Endothelial cell of umbilical vein (primary cell): ENCODE measurements at regions of chr19 and their contacts with region 1.

Region 1: DNA sequence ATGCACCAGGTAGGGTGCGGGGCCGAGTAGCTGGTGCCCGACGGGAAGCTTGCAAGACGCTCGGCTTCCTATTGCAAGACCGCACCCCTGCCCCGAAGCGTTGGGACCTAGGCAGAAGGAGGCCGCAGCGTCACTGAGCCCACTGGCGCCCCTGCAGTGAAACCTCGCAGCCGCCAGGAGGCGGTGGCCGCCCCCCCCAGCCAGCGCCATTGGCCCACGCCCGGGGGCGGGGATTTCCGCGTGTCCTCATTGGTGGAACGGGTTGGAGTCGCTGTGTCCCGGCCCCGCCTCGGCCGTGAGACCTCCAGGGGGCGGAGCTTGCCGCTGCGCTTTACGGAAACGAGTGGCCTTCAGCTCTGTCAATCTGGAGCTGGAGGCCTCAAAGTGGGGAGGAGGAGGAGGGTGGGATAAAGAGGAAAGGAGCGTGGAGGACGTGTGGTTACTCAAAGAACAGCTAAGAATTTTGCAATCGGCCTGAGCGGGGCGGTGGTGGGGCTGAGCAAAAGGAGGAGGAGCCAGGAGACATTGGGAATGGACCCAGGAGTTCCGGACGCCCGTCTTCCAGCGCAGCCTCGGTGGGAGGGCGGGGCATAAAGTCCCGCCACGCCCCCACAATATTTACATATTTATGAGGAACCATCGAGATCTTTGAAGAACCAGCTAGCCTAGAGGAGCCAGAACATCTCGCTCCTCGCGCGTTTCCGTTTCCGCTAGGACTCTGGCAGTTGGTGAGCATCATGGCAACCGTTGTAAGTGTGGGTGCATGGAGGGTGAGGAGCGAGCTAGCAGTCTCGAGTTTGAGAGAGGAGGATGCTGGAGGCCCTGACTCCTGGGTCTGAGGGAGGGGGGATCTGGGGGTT is at the starts of genes GYS1 and RUVBL2:
- DNase-seq: peak; percentile 100
- H3K4me3 ChIP-seq: peak within 1 kb of the TSS; percentile 83 to 92 (median 86)
- H3K27ac ChIP-seq: peak within 1 kb of the TSS; percentile 61
- H3K4me1 ChIP-seq: peaks cover 14% of the 10 kb centered on the region
- H3K27me3 ChIP-seq: no peaks in the 10 kb centered on the region
- CTCF ChIP-seq: peak; percentile 98 to 100
- POLR2A ChIP-seq: peak; percentile 88
- total RNA-seq, gene GYS1: 53.9 and 58.9 TPM in 2 replicates
- total RNA-seq, gene RUVBL2: 110 and 115 TPM in 2 replicates

Region 2: GRCh38 chr19:48795055-48795684 is 198.2 kb before region 1 on chr19:
- CTCF ChIA-PET with region 1: interaction called, 13 read pairs
- POLR2A ChIA-PET with region 1: no interaction called
- dilution Hi-C with region 1: no loop called
- intact Hi-C with region 1: no loop called
- DNase-seq: peak; percentile 95
- H3K4me3 ChIP-seq: peak overlapping the region in 2 of 3 experiments; percentile 18 to 37
- H3K27ac ChIP-seq: peak overlapping the region; percentile 2
- H3K4me1 ChIP-seq: peaks cover 3% of the 10 kb centered on the region
- H3K27me3 ChIP-seq: no peaks in the 10 kb centered on the region
- CTCF ChIP-seq: peak; percentile 94 to 96
- POLR2A ChIP-seq: peak; percentile 48

Region 3: GRCh38 chr19:48918801-48919247 is 74.6 kb before region 1 on chr19:
- CTCF ChIA-PET with region 1: no interaction called
- POLR2A ChIA-PET with region 1: no interaction called
- dilution Hi-C with region 1: no loop called
- intact Hi-C with region 1: no loop called
- DNase-seq: peak; percentile 21
- H3K4me3 ChIP-seq: no peak overlapping the region
- H3K27ac ChIP-seq: no peak overlapping the region
- H3K4me1 ChIP-seq: no peaks in the 10 kb centered on the region
- H3K27me3 ChIP-seq: no peaks in the 10 kb centered on the region
- CTCF ChIP-seq: no peak
- POLR2A ChIP-seq: no peak

Region 4: GRCh38 chr19:48975947-48976847 is 17.2 kb before region 1 on chr19:
- CTCF ChIA-PET with region 1: interaction called, 41 read pairs
- POLR2A ChIA-PET with region 1: interaction called, 3 read pairs
- dilution Hi-C with region 1: no loop called
- intact Hi-C with region 1: loop called (anchors 2 kb)
- DNase-seq: peak; percentile 49
- H3K4me3 ChIP-seq: no peak overlapping the region
- H3K27ac ChIP-seq: no peak overlapping the region
- H3K4me1 ChIP-seq: no peaks in the 10 kb centered on the region
- H3K27me3 ChIP-seq: no peaks in the 10 kb centered on the region
- CTCF ChIP-seq: peak in 1 of 2 donors; percentile 4
- POLR2A ChIP-seq: no peak

Region 5: DNA sequence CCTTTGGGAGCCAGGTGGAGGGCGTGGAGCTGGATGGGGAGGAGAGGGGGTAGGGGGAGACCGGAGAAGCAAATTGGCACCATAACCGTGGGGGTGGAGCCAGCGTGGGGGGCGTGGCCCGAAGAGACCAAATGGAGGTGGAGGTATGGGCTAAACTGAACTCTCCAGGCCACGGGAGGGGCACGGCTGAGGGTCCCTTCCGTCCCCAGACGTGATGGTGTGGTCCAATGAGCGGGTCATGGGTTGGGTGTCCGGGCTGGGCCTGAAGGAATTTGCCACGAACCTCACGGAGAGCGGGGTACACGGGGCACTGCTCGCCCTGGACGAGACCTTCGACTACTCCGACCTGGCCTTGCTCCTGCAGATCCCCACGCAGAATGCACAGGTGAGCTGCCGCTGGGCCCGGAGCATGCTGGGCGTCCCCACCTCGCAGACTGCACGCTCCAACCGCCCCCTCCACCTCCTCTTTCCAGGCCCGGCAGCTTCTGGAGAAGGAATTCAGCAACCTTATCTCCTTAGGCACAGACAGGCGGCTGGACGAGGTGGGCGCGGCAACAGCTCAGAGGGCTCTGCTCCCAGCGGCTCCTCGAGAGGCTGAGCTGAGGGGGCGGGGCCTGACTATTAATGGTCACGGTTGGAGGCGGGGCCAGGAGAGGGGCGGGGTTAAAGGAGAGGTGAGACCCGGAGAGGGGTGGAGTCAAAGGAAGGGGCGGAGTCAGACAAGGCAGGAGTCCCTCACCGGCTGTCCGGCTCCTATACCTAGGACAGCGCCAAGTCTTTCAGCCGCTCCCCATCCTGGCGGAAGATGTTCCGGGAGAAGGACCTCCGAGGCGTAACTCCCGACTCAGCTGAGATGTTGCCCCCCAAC is 155.6 kb after region 1 on chr19:
- CTCF ChIA-PET with region 1: interaction called, 4 read pairs
- POLR2A ChIA-PET with region 1: no interaction called
- dilution Hi-C with region 1: no loop called
- intact Hi-C with region 1: loop called (anchors 10 kb)
- DNase-seq: peak; percentile 91
- H3K4me3 ChIP-seq: peak overlapping the region; percentile 31 to 73 (median 61)
- H3K27ac ChIP-seq: no peak overlapping the region
- H3K4me1 ChIP-seq: peaks cover 28% of the 10 kb centered on the region
- H3K27me3 ChIP-seq: peaks cover 2 to 5% of the 10 kb centered on the region in 2 experiments
- CTCF ChIP-seq: no peak
- POLR2A ChIP-seq: no peak